Panc1 (cell line): ENCODE measurements at regions of chr7 and their contacts with region 1.

Region 1: GRCh38 chr7:80941208-80941758 is 22.4 kb upstream of the SEMA3C start:
- DNase-seq: peak; percentile 92
- ATAC-seq: no peak
- H3K4me3 ChIP-seq: no peak overlapping the region
- H3K27ac ChIP-seq: peak overlapping the region; percentile 98
- H3K4me1 ChIP-seq: peaks cover 38% of the 10 kb centered on the region
- H3K27me3 ChIP-seq: no peaks in the 10 kb centered on the region
- CTCF ChIP-seq: no peak

Region 2: GRCh38 chr7:80432166-80432565 is 509.1 kb before region 1 on chr7:
- CTCF ChIA-PET with region 1: no interaction called
- POLR2A ChIA-PET with region 1: no interaction called
- in situ Hi-C with region 1: no loop called
- intact Hi-C with region 1: no loop called
- DNase-seq: no peak
- ATAC-seq: no peak
- H3K4me3 ChIP-seq: no peak overlapping the region
- H3K27ac ChIP-seq: no peak overlapping the region
- H3K4me1 ChIP-seq: no peaks in the 10 kb centered on the region
- H3K27me3 ChIP-seq: no peaks in the 10 kb centered on the region
- CTCF ChIP-seq: no peak

Region 3: GRCh38 chr7:80960244-80960795 is 19.0 kb after region 1 on chr7:
- CTCF ChIA-PET with region 1: no interaction called
- POLR2A ChIA-PET with region 1: interaction called, 15 read pairs
- in situ Hi-C with region 1: no loop called
- intact Hi-C with region 1: no loop called
- DNase-seq: no peak
- ATAC-seq: no peak
- H3K4me3 ChIP-seq: no peak overlapping the region
- H3K27ac ChIP-seq: no peak overlapping the region; the same call in 1 of the 2 replicates
- H3K4me1 ChIP-seq: no peaks in the 10 kb centered on the region
- H3K27me3 ChIP-seq: no peaks in the 10 kb centered on the region
- CTCF ChIP-seq: no peak

Region 4: DNA sequence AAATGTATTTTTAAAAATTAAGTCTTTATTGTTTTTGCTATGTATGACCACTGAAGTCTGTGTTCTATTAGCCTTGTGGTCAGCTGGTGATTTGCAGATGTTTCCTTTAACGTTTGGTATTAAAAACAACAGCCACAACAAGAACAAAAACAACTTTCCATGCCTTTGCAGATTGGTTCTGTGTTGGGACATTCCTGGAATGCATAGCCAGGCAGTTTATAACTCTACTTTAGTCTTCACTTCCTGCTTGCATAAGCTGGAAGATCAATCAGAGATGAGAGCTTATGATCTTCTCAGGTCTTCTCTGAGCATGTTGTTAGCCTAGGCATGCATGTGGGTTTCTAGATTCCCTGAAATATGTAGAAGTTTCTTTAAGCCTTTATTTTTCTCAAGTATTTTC is 36.5 kb after region 1 on chr7:
- CTCF ChIA-PET with region 1: no interaction called
- POLR2A ChIA-PET with region 1: no interaction called
- in situ Hi-C with region 1: no loop called
- intact Hi-C with region 1: no loop called
- DNase-seq: no peak
- ATAC-seq: no peak
- H3K4me3 ChIP-seq: no peak overlapping the region
- H3K27ac ChIP-seq: no peak overlapping the region; the same call in 1 of the 2 replicates
- H3K4me1 ChIP-seq: no peaks in the 10 kb centered on the region
- H3K27me3 ChIP-seq: no peaks in the 10 kb centered on the region
- CTCF ChIP-seq: no peak

Region 5: DNA sequence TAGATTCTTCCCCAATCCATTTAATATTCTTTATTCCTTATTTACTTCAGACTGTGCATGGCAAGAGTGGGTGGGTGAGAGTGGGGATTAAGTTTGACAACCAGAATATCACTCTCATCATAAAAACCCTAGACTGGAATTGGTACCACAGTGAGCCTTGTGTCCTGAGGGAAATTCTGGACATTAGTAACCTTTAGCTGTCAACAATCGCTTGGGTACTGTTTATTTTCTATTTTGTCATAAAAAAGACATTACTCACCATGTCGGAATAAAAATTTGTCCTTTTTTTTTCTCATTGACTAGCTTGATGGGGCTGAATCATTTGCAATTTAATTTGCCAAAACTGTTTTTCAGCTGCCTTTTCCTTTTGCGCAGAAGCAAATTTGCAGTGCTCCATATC is 153.7 kb after region 1 on chr7:
- CTCF ChIA-PET with region 1: no interaction called
- POLR2A ChIA-PET with region 1: no interaction called
- in situ Hi-C with region 1: no loop called
- intact Hi-C with region 1: loop called (anchors 5 kb)
- DNase-seq: no peak
- ATAC-seq: peak; percentile 84
- H3K4me3 ChIP-seq: peak overlapping the region in 1 of 2 experiments; percentile 7; a peak in 1 of 4 replicates
- H3K27ac ChIP-seq: peak overlapping the region; percentile 60
- H3K4me1 ChIP-seq: peaks cover 12% of the 10 kb centered on the region; the same call in 1 of the 2 replicates
- H3K27me3 ChIP-seq: no peaks in the 10 kb centered on the region
- CTCF ChIP-seq: no peak

Region 6: GRCh38 chr7:81161458-81162075 is 220.3 kb after region 1 on chr7:
- CTCF ChIA-PET with region 1: interaction called, 10 read pairs
- POLR2A ChIA-PET with region 1: interaction called, 4 read pairs
- in situ Hi-C with region 1: no loop called
- intact Hi-C with region 1: no loop called
- DNase-seq: no peak
- ATAC-seq: no peak
- H3K4me3 ChIP-seq: no peak overlapping the region
- H3K27ac ChIP-seq: peak overlapping the region; percentile 58; the same call in 1 of the 2 replicates
- H3K4me1 ChIP-seq: no peaks in the 10 kb centered on the region; the same call in 1 of the 2 replicates
- H3K27me3 ChIP-seq: no peaks in the 10 kb centered on the region
- CTCF ChIP-seq: no peak